ENCODE measurements at regions of chr14 and their contacts with region 1.

Region 1: GRCh38 chr14:92693998-92694795 is 54.2 kb downstream of the LGMN start:
- DNase-seq: no peak
- H3K4me3 ChIP-seq: no peak overlapping the region
- H3K27ac ChIP-seq: no peak overlapping the region
- H3K4me1 ChIP-seq: peaks cover 6 to 12% of the 10 kb centered on the region in 2 donors
- H3K27me3 ChIP-seq: no peaks in the 10 kb centered on the region
- CTCF ChIP-seq: no peak
- POLR2A ChIP-seq: no peak

Region 2: GRCh38 chr14:92717571-92718042 is 23.4 kb after region 1 on chr14:
- intact Hi-C with region 1: loop called (anchors 1 kb)
- DNase-seq: no peak
- H3K4me3 ChIP-seq: no peak overlapping the region
- H3K27ac ChIP-seq: no peak overlapping the region
- H3K4me1 ChIP-seq: no peaks in the 10 kb centered on the region
- H3K27me3 ChIP-seq: no peaks in the 10 kb centered on the region
- CTCF ChIP-seq: no peak
- POLR2A ChIP-seq: no peak